CD8-positive, alpha-beta T cell (primary cell): ENCODE measurements at regions of chr13 and their contacts with region 1.

Region 1: DNA sequence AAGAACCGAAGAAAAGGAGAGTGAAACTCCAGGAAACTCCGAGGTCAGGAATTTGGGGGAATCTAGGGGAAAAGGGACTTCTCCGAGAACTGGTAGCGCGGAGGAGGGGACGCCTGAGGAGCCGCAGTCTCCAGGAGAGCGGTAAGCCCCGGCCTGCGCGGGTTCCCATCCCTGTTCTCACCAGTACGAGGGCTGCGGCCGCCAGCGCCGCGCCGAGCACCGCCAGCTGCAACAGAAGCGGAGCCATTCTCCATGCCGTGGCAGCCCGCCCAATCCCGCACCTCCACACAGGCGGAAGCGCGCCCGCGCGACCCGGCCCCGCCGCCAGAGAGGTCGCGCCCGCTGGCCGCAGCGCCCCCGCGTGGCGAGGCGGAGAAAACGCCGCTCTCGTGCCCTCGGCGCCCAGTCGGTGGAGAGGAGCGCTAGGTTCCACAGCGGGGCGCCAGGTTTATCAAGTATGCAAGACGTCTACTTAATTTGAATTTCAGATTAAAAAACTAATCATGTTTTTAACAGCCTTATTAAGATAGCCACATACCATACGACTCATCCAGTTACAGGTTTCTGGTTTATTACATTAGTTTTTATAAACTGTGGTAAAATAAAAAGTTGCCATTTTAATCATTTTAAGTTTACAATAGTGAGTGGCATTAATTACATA is at the start of gene ALG5:
- DNase-seq: peak; percentile 86 to 96 (median 93)
- ATAC-seq: peak; percentile 62
- H3K4me3 ChIP-seq: peak within 1 kb of the TSS; percentile 88 to 94
- H3K4me3 Mint-ChIP-seq: peak within 1 kb of the TSS; percentile 98
- H3K27ac ChIP-seq: peak within 1 kb of the TSS; percentile 93 to 99
- H3K27ac Mint-ChIP-seq: peak within 1 kb of the TSS; percentile 100
- H3K4me1 ChIP-seq: peaks cover 21% of the 10 kb centered on the region
- H3K4me1 Mint-ChIP-seq: peaks cover 41% of the 10 kb centered on the region
- H3K27me3 ChIP-seq: no peaks in the 10 kb centered on the region
- H3K27me3 Mint-ChIP-seq: no peaks in the 10 kb centered on the region
- CTCF ChIP-seq: peak; percentile 95
- total RNA-seq, gene ALG5: 17.8 to 20.7 TPM

Region 2: GRCh38 chr13:36282818-36283445 is 716.3 kb before region 1 on chr13:
- CTCF ChIA-PET with region 1: no interaction called
- POLR2A ChIA-PET with region 1: no interaction called
- intact Hi-C with region 1: no loop called
- DNase-seq: peak in 2 of 9 experiments; percentile 8 to 19
- ATAC-seq: no peak
- H3K4me3 ChIP-seq: no peak overlapping the region
- H3K4me3 Mint-ChIP-seq: no peak overlapping the region
- H3K27ac ChIP-seq: no peak overlapping the region
- H3K27ac Mint-ChIP-seq: no peak overlapping the region
- H3K4me1 ChIP-seq: no peaks in the 10 kb centered on the region
- H3K4me1 Mint-ChIP-seq: no peaks in the 10 kb centered on the region
- H3K27me3 ChIP-seq: no peaks in the 10 kb centered on the region
- H3K27me3 Mint-ChIP-seq: no peaks in the 10 kb centered on the region
- CTCF ChIP-seq: peak; percentile 73

Region 3: DNA sequence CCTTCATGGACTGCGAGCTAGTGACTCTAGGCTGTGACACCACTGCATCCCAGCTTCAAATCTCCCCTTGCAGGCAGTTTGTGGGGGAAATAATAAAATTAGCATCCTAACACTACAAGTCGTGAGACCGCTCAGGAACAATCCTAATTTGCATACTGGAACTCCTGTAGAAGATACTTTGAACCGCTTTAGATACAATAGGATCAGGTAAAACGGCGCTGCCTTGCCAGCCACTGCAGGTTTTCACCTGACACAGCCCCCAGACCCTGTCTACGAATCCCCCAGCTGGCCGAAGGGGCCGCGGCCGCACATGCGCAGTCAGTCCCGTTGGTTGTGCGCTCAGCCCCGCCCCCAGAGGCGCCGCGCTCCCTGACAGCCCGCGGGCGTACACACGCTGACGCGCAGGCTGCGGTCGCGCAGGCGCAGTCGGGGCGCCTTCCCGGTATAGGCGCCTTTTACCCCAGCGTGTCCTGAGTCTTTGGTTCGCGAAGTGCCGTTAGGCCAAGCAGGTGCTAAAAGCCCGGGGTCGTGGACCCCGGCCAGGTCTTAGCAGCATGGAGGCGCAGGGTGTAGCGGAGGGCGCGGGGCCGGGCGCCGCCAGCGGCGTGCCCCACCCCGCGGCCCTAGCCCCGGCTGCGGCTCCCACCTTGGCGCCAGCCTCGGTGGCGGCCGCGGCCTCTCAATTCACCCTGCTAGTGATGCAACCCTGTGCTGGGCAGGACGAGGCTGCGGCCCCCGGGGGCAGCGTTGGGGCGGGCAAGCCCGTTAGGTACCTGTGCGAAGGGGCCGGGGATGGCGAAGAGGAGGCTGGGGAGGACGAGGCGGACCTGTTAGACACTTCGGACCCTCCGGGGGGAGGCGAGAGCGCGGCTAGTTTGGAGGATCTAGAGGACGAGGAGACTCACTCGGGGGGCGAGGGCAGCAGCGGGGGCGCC is 180.1 kb before region 1 on chr13 and contains the start of gene RFXAP:
- CTCF ChIA-PET with region 1: no interaction called
- POLR2A ChIA-PET with region 1: interaction called, 3 read pairs
- intact Hi-C with region 1: loop called (anchors 1 to 2 kb)
- DNase-seq: peak; percentile 80 to 95 (median 90)
- ATAC-seq: peak; percentile 93
- H3K4me3 ChIP-seq: peak within 1 kb of the TSS; percentile 82 to 83
- H3K4me3 Mint-ChIP-seq: peak within 1 kb of the TSS; percentile 93
- H3K27ac ChIP-seq: peak within 1 kb of the TSS; percentile 69 to 87
- H3K27ac Mint-ChIP-seq: peak within 1 kb of the TSS; percentile 94
- H3K4me1 ChIP-seq: peaks cover 25% of the 10 kb centered on the region
- H3K4me1 Mint-ChIP-seq: peaks cover 49% of the 10 kb centered on the region
- H3K27me3 ChIP-seq: no peaks in the 10 kb centered on the region
- H3K27me3 Mint-ChIP-seq: peaks cover 5% of the 10 kb centered on the region
- CTCF ChIP-seq: no peak
- total RNA-seq, gene RFXAP: 4.1 to 5.4 TPM

Region 4: GRCh38 chr13:36986462-36987240 is 12.5 kb before region 1 on chr13:
- CTCF ChIA-PET with region 1: interaction called, 4 read pairs
- POLR2A ChIA-PET with region 1: interaction called, 16 read pairs
- intact Hi-C with region 1: no loop called
- DNase-seq: no peak
- ATAC-seq: no peak
- H3K4me3 ChIP-seq: no peak overlapping the region
- H3K4me3 Mint-ChIP-seq: no peak overlapping the region
- H3K27ac ChIP-seq: no peak overlapping the region
- H3K27ac Mint-ChIP-seq: no peak overlapping the region
- H3K4me1 ChIP-seq: no peaks in the 10 kb centered on the region
- H3K4me1 Mint-ChIP-seq: no peaks in the 10 kb centered on the region
- H3K27me3 ChIP-seq: no peaks in the 10 kb centered on the region
- H3K27me3 Mint-ChIP-seq: no peaks in the 10 kb centered on the region
- CTCF ChIP-seq: no peak

Region 5: DNA sequence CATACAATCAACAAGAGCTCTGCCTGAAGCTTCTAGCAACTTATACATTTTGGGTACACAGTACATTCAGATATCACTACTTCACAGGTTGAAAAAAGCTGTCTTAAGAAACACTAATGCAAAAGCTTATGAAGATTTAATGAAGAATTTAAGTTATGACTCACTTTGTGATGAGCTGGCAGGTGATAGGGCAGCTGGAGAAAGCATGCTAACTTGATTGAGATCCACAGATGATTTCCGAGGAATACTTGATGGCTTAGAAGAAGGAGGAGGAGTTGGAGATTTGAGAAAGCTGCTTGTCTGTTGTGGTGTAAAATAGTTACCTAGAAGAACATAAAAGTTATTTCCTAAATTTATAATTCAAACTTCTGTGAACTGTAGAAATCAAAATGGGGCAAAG is 24.7 kb after region 1 on chr13:
- CTCF ChIA-PET with region 1: no interaction called
- POLR2A ChIA-PET with region 1: interaction called, 6 read pairs
- intact Hi-C with region 1: loop called in 1 of 2 experiments (anchors 2 kb)
- DNase-seq: no peak
- ATAC-seq: no peak
- H3K4me3 ChIP-seq: no peak overlapping the region
- H3K4me3 Mint-ChIP-seq: no peak overlapping the region
- H3K27ac ChIP-seq: no peak overlapping the region
- H3K27ac Mint-ChIP-seq: peak overlapping the region; percentile 56
- H3K4me1 ChIP-seq: no peaks in the 10 kb centered on the region
- H3K4me1 Mint-ChIP-seq: peaks cover 3% of the 10 kb centered on the region
- H3K27me3 ChIP-seq: no peaks in the 10 kb centered on the region
- H3K27me3 Mint-ChIP-seq: no peaks in the 10 kb centered on the region
- CTCF ChIP-seq: no peak

Region 6: GRCh38 chr13:37058910-37059847 is 60.0 kb after region 1 on chr13 and contains the start of gene SUPT20H:
- CTCF ChIA-PET with region 1: no interaction called
- POLR2A ChIA-PET with region 1: interaction called, 39 read pairs
- intact Hi-C with region 1: loop called (anchors 1 kb)
- DNase-seq: peak; percentile 90 to 97 (median 95)
- ATAC-seq: peak; percentile 91
- H3K4me3 ChIP-seq: peak within 1 kb of the TSS; percentile 93 to 96
- H3K4me3 Mint-ChIP-seq: peak within 1 kb of the TSS; percentile 90
- H3K27ac ChIP-seq: peak within 1 kb of the TSS; percentile 95 to 96
- H3K27ac Mint-ChIP-seq: peak within 1 kb of the TSS; percentile 99
- H3K4me1 ChIP-seq: peaks cover 24% of the 10 kb centered on the region
- H3K4me1 Mint-ChIP-seq: peaks cover 50% of the 10 kb centered on the region
- H3K27me3 ChIP-seq: no peaks in the 10 kb centered on the region
- H3K27me3 Mint-ChIP-seq: no peaks in the 10 kb centered on the region
- CTCF ChIP-seq: no peak
- total RNA-seq, gene SUPT20H: 53.0 to 55.0 TPM

Region 7: GRCh38 chr13:37806666-37807065 is 807.5 kb after region 1 on chr13:
- CTCF ChIA-PET with region 1: no interaction called
- POLR2A ChIA-PET with region 1: no interaction called
- intact Hi-C with region 1: no loop called
- DNase-seq: no peak
- ATAC-seq: no peak
- H3K4me3 ChIP-seq: no peak overlapping the region
- H3K4me3 Mint-ChIP-seq: no peak overlapping the region
- H3K27ac ChIP-seq: no peak overlapping the region
- H3K27ac Mint-ChIP-seq: no peak overlapping the region
- H3K4me1 ChIP-seq: no peaks in the 10 kb centered on the region
- H3K4me1 Mint-ChIP-seq: no peaks in the 10 kb centered on the region
- H3K27me3 ChIP-seq: no peaks in the 10 kb centered on the region
- H3K27me3 Mint-ChIP-seq: no peaks in the 10 kb centered on the region
- CTCF ChIP-seq: no peak

Region 8: GRCh38 chr13:37869756-37870488 is 870.7 kb after region 1 on chr13 and contains the start of gene TRPC4:
- CTCF ChIA-PET with region 1: no interaction called
- POLR2A ChIA-PET with region 1: no interaction called
- intact Hi-C with region 1: no loop called
- DNase-seq: no peak
- ATAC-seq: no peak
- H3K4me3 ChIP-seq: no peak within 1 kb of the TSS
- H3K4me3 Mint-ChIP-seq: no peak within 1 kb of the TSS
- H3K27ac ChIP-seq: no peak within 1 kb of the TSS
- H3K27ac Mint-ChIP-seq: no peak within 1 kb of the TSS
- H3K4me1 ChIP-seq: no peaks in the 10 kb centered on the region
- H3K4me1 Mint-ChIP-seq: no peaks in the 10 kb centered on the region
- H3K27me3 ChIP-seq: peaks cover 3 to 5% of the 10 kb centered on the region in 2 experiments
- H3K27me3 Mint-ChIP-seq: peaks cover 24% of the 10 kb centered on the region
- CTCF ChIP-seq: no peak
- total RNA-seq, gene TRPC4: not detected